Common myeloid progenitor, CD34-positive (primary cell): ENCODE measurements at regions of chr15 and their contacts with region 1.

Region 1: GRCh38 chr15:45166834-45167630 is 20.7 kb downstream of the SHF start:
- DNase-seq: peak; percentile 88 to 94 (median 94)
- H3K4me3 ChIP-seq: peak overlapping the region; percentile 51 to 77 (median 72)
- H3K27ac ChIP-seq: peak overlapping the region; percentile 88 to 91
- H3K4me1 ChIP-seq: peaks cover 0 to 49% (median 38%) of the 10 kb centered on the region in 4 experiments
- H3K27me3 ChIP-seq: no peaks in the 10 kb centered on the region

Region 2: DNA sequence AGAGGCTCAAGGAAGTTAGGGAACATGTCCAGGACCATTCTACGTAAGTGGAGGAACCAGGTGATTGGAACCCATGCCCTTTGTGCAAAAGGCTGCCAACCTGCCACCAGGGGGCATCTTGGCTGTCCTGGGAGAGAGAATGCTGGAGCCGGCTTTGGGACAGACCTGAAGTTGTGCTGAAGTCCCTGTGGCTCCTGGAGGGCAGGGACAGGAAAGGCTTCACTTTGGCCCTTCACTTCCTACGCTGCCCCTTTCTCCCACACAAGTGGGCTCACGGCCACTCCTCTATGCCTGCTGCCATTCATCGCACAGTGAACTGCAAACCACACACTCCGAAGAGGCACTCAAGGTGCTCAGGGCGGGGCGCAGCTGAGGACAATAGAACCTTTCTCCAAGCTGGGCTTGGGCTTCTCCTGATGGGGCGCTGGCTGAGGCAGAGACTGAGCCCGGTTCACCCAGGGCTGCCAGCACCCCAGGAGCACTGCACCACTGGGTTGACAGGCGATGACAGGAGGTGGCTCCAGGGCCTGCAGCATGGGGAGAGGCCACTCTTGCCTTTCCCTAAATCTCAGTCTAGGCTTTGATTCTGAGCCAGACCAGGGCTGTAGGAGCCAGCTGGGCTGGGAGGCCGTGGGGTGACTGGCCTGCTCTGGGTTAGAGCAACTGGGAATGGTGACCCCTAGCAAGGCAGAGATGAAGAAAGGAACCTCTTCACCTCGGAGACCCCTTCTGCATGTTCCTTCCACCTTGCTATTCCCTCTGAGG is 12.4 kb after region 1 on chr15:
- CTCF ChIA-PET with region 1: interaction called, 118 read pairs
- POLR2A ChIA-PET with region 1: interaction called, 27 read pairs
- DNase-seq: no peak
- H3K4me3 ChIP-seq: peak overlapping the region in 1 of 7 experiments; percentile 17
- H3K27ac ChIP-seq: no peak overlapping the region
- H3K4me1 ChIP-seq: peaks cover 17 to 57% (median 57%) of the 10 kb centered on the region in 4 experiments
- H3K27me3 ChIP-seq: no peaks in the 10 kb centered on the region

Region 3: DNA sequence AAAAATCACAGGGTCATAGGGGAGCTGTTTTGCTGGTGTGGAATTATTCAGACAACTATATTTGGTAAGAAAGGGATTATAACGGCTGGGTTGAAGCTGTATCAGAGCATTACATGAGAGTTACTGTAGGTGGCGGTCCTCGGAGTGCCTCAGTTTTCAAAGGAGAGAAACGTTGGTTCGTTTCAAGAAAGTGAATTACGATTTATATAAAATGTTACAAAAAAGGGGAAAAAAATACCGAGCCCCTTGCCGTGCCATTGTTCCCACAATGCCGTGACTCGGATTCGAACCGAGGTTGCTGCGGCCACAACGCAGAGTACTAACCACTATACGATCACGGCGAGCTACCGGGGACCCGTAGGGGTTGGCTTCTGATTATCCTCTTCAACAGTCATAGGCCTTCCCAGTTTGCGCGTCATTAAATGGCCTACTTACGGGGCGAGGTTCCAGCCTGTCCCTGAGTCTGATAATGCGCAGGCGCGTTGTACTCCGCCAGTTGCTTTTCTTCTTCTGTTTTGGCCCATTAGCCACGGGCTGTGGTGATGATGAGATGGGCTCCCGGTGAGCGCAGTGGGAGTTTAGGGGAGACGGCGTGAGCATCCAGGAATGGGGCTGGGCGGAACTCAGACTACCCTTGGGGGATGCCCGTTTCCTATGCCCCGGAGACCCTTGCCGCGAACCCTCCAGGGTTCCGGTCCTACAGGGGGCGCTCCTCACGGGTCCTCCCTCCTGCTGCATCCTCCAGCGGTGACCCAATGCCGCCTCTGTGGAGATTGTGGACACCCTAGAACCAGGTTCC is 31.5 kb after region 1 on chr15:
- CTCF ChIA-PET with region 1: interaction called, 179 read pairs
- POLR2A ChIA-PET with region 1: interaction called, 4 read pairs
- DNase-seq: peak; percentile 96 to 99 (median 98)
- H3K4me3 ChIP-seq: peak overlapping the region; percentile 50 to 90 (median 83)
- H3K27ac ChIP-seq: peak overlapping the region; percentile 46 to 94
- H3K4me1 ChIP-seq: peaks cover 4 to 30% (median 27%) of the 10 kb centered on the region in 4 experiments
- H3K27me3 ChIP-seq: no peaks in the 10 kb centered on the region

Region 4: DNA sequence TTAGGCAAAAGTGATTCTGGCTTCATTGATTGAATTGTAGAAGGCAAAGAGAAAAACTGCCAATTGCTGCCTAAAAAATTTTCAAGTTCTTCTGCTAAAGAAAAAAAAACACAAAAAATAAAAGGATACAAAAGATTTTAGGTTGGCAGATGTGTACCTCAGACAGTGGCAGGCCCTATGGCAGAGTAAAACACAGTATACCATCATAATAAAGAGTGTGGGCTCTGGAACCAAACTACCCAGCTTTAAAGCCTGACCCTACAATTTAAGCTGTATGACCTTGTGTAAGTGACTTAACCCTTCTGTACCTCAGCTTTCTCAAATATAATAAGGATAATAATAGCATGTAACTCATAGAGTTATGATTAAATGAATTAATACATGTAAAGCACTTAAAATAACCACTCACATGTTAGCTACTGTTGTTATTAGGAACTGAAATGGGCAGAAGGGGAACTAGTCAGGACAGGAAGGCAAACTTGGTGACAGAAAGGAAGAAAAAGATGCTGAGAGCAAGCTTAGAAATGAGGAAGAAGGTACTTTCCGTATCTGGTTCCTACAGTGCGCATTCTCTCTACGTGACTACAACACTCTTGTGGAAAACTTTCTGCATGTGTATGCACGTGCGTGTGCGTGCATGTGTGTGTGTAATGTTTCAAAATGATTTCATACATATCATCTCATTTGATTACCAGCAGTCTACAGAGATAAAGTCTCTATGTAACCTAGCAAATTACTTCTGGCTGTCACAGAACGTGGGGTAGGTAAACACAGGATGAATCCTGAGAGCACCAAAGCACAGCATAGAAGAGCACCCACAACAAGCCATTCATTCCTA is 224.9 kb after region 1 on chr15:
- CTCF ChIA-PET with region 1: interaction called, 88 read pairs
- POLR2A ChIA-PET with region 1: interaction called, 8 read pairs
- DNase-seq: peak; percentile 32 to 86 (median 84)
- H3K4me3 ChIP-seq: no peak overlapping the region
- H3K27ac ChIP-seq: no peak overlapping the region
- H3K4me1 ChIP-seq: peaks cover 0 to 9% (median 3%) of the 10 kb centered on the region in 4 experiments
- H3K27me3 ChIP-seq: no peaks in the 10 kb centered on the region